ENCODE measurements at regions of chr17 and their contacts with region 1.

Region 1: DNA sequence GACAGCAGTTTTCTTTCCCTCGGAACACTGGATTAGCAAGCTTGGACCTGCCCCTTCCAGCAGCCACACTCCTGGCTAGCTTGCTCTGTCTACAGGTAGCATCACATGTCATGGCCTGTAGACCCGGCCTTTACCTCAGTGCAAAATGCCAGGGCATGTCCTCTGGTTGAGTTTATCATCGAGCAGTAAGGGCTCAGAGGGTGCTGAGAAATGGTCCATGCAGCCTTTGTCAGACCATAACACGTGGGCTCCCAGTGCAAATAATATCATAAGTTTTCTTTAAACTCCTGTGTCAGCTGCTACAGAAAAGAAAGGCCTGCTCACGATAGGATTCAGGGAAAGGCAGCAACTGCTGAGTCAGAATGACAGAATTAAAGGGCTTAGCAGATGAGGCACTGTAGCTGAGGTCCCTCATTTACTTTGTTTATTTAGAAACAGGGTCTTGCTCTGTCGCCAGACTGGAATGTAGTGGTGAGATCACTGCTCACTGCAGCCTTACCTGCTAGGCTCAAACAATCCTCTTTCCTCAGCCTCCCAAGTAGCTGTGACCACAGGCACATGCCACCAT is 8.0 kb upstream of the GNA13 start:
- DNase-seq: peak; percentile 80
- H3K4me3 Mint-ChIP-seq: no peak overlapping the region
- H3K27ac Mint-ChIP-seq: peak overlapping the region; percentile 79
- H3K4me1 Mint-ChIP-seq: peaks cover 20% of the 10 kb centered on the region
- H3K27me3 Mint-ChIP-seq: no peaks in the 10 kb centered on the region
- CTCF ChIP-seq: no peak

Region 2: GRCh38 chr17:65027305-65027704 is 37.2 kb before region 1 on chr17:
- CTCF ChIA-PET with region 1: interaction called, 3 read pairs
- POLR2A ChIA-PET with region 1: interaction called, 55 read pairs
- intact Hi-C with region 1: no loop called
- DNase-seq: peak; percentile 72
- H3K4me3 Mint-ChIP-seq: no peak overlapping the region
- H3K27ac Mint-ChIP-seq: peak overlapping the region; percentile 42
- H3K4me1 Mint-ChIP-seq: peaks cover 38% of the 10 kb centered on the region
- H3K27me3 Mint-ChIP-seq: no peaks in the 10 kb centered on the region
- CTCF ChIP-seq: peak; percentile 36

Region 3: DNA sequence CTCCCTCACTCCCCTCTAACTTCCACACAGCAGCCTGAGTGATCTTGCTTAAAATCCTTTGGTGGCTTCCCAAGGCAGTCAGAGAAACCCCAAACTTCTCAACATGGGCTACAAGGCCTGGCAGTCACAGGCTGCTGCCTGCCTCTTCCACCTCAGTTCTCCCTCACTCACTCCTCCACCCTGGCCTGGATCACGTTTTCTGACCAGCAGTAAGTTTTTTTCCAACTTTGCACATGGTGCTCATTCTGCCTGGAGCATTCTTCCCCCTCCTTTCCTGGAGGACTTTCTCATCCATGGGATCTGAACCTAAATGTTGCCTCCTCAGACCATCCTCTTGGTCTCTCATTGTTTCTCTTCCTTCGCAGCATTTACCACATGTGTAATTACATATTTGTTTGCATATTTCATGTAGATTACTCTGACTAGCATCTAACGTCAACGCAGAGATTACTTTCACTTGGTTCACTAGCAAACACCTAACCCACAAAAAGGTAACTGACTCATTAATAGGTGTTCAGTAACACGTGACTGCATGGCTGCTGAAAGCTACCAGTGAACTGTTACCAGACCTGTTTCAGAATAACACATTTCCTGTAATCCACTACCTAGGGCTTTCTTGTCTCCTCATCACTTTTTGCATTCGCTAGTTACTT is 25.1 kb before region 1 on chr17:
- CTCF ChIA-PET with region 1: interaction called, 3 read pairs
- POLR2A ChIA-PET with region 1: interaction called, 10 read pairs
- intact Hi-C with region 1: no loop called
- DNase-seq: peak; percentile 52
- H3K4me3 Mint-ChIP-seq: peak overlapping the region; percentile 49
- H3K27ac Mint-ChIP-seq: peak overlapping the region; percentile 46
- H3K4me1 Mint-ChIP-seq: peaks cover 40% of the 10 kb centered on the region
- H3K27me3 Mint-ChIP-seq: no peaks in the 10 kb centered on the region
- CTCF ChIP-seq: no peak

Region 4: DNA sequence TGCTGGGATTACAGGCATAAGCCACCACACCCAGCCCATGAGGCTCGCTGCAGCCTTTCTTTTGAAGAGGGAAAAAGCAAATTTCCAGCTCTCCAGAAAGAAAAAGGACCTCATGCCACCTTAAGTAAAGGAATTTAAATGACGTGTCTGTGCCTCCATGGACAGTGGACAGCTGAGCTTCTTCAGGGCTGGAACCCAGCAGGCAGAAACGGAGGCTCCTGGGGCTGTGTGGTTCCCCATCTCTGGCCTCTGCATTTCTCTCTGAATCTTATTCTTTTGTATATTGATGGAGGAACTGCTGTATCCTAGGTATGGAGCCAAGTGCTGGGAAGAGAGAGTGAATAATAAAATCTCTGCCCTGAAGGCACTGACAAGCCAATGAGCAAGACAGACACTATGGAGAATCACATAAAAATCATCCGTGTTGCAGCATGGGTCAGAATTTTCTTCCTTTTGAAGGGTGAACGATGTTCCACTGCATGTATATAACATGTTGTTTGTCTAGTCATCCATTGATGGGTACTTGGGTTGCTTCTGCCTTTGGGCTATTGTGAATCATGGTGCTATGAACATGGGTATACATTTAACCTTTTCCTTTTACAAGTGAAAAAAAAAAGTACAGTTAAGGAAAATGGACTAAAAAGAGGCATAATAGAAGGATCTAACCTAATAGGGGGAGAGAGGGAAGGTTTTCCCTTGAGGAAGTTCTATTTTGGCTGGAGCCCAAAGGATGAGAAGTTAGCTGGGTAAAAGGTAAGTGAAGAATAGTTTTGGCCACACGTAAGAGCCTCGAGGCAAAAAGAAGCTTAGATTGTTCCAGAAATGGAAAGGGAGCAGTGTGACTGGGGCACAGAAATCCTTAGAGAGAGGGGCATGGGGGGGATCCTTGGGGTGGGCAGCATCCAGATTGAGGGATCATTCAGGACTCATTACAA is 24.1 kb after region 1 on chr17:
- CTCF ChIA-PET with region 1: interaction called, 3 read pairs
- POLR2A ChIA-PET with region 1: interaction called, 17 read pairs
- intact Hi-C with region 1: no loop called
- DNase-seq: peak; percentile 30
- H3K4me3 Mint-ChIP-seq: no peak overlapping the region
- H3K27ac Mint-ChIP-seq: peak overlapping the region; percentile 32
- H3K4me1 Mint-ChIP-seq: peaks cover 20% of the 10 kb centered on the region
- H3K27me3 Mint-ChIP-seq: peaks cover 16% of the 10 kb centered on the region
- CTCF ChIP-seq: no peak

Measured in MCF 10A (cell line).